PC-9 (cell line): ENCODE measurements at regions of chr3 and their contacts with region 1.

Region 1: GRCh38 chr3:64399205-64399800 is 174.0 kb upstream of the PRICKLE2 start:
- DNase-seq: peak in 1 of 2 experiments; percentile 35
- H3K4me3 ChIP-seq: no peak overlapping the region
- H3K27ac ChIP-seq: no peak overlapping the region
- H3K4me1 ChIP-seq: no peaks in the 10 kb centered on the region
- H3K27me3 ChIP-seq: no peaks in the 10 kb centered on the region
- CTCF ChIP-seq: peak; percentile 76

Region 2: GRCh38 chr3:64267721-64268604 is 131.3 kb before region 1 on chr3:
- CTCF ChIA-PET with region 1: no interaction called
- POLR2A ChIA-PET with region 1: no interaction called
- intact Hi-C with region 1: loop called (anchors 2 kb)
- DNase-seq: peak in 1 of 2 experiments; percentile 22
- H3K4me3 ChIP-seq: peak overlapping the region; percentile 50; the same call in 1 of the 2 replicates
- H3K27ac ChIP-seq: no peak overlapping the region
- H3K4me1 ChIP-seq: no peaks in the 10 kb centered on the region
- H3K27me3 ChIP-seq: no peaks in the 10 kb centered on the region
- CTCF ChIP-seq: no peak

Region 3: DNA sequence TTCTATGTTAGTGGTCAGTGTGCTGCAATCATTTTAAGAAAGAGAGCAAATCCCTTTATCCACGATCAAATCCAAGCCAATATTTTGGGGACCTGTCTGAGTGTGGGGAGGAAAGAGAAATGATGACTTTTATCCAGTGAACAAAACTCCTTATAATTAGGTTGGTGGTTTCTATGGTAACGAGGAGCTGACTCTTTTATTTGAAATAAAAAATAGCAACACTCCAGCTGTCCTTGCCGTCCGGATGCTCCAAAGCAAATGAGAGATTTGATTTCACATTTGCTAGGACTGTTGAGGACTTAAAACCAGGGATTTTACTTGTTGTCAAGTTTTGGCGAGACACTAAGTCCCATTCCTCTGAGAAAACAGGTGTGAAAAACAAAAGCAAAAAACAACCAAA is 20.1 kb before region 1 on chr3:
- CTCF ChIA-PET with region 1: no interaction called
- POLR2A ChIA-PET with region 1: no interaction called
- intact Hi-C with region 1: no loop called
- DNase-seq: no peak
- H3K4me3 ChIP-seq: no peak overlapping the region
- H3K27ac ChIP-seq: no peak overlapping the region
- H3K4me1 ChIP-seq: no peaks in the 10 kb centered on the region
- H3K27me3 ChIP-seq: no peaks in the 10 kb centered on the region
- CTCF ChIP-seq: no peak

Region 4: DNA sequence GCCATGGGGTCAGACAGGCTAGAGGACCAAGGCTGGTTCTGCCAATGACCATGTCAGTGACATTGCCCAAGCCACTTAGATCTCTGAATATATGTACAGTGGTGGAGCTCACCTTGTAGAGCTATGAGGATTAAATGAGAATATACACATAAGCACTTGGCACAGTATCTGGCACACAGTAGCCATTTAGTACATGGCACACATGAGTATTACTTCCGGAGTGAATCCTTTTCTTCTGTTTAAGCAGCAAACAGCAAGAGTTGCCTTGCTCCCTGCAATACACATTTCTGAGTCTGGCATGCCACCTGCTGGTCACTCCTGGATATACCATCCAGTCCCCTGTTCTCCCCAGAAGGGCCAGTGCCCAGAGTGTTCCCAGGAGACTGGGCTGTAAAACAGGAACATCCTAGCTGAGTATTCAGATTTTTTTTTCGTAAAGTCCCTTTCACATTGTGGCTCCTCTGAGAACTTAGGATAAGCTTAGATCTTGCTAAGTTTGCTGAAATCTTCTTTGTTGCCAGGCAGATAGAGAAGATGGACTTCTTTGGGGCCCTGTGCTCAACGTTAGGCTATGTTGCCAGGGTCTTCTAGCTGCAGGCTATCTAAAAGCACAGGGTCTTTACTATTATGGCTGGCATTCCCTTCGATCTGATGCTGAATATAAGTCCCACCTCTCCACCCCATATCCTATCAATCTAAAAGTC is 85.1 kb after region 1 on chr3:
- CTCF ChIA-PET with region 1: no interaction called
- POLR2A ChIA-PET with region 1: no interaction called
- intact Hi-C with region 1: loop called (anchors 1 kb)
- DNase-seq: peak; percentile 60 to 75
- H3K4me3 ChIP-seq: no peak overlapping the region
- H3K27ac ChIP-seq: no peak overlapping the region
- H3K4me1 ChIP-seq: no peaks in the 10 kb centered on the region
- H3K27me3 ChIP-seq: no peaks in the 10 kb centered on the region
- CTCF ChIP-seq: peak; percentile 87